BJ (cell line): ENCODE measurements at regions of chr14 and their contacts with region 1.

Region 1: GRCh38 chr14:69559581-69560011 is 15.1 kb downstream of the CCDC177 start:
- DNase-seq: no peak
- H3K4me3 ChIP-seq: no peak overlapping the region
- H3K27me3 ChIP-seq: peaks cover 19% of the 10 kb centered on the region
- CTCF ChIP-seq: no peak

Region 2: DNA sequence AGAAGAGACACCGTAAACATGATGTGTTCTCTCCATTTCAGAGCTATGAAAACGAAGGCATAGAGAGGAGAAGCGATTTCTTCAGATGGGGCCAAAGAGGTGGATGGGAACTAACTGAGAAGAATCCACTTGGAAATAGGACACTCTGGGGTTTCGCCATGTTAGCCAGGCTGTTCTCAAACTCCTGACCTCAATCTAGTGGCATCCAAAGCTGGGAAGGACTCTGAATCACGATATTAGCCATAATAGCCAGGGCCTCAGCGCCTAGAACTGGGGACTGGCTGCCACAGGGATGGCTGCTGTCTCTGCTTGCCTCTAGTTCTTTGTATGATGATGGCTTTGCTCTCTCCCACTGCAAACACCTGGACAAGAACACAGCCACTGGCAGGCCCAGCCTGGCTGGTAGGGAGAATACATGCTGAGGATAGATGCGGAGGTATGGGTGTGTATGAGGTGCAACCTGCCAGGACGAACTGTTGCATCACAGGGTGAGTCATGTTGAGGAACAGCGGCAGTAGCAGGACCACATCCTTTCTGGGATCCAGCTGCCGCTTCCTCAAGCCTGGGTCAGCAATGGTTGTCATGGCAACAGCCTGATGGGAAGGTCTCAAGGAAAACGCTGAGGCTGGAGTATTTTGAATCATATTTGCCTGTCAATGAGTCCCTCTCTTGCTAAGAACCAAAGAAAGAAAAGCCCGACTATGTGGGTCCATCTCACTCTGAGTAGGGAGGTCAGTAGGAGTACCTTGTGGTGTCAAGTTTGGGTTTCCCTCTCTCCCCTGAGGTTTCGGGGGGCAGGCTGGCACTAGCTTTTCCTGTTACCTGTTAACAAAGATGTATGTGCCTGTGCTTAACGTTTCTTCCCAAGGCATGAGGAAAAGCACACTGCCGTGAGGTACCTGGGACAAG is 16.0 kb before region 1 on chr14:
- CTCF ChIA-PET with region 1: interaction called, 19 read pairs
- POLR2A ChIA-PET with region 1: no interaction called
- DNase-seq: no peak
- H3K4me3 ChIP-seq: no peak overlapping the region
- H3K27me3 ChIP-seq: peaks cover 3% of the 10 kb centered on the region
- CTCF ChIP-seq: no peak